Naive thymus-derived CD4-positive, alpha-beta T cell (primary cell): ENCODE measurements at regions of chr6 and their contacts with region 1.

Region 1: DNA sequence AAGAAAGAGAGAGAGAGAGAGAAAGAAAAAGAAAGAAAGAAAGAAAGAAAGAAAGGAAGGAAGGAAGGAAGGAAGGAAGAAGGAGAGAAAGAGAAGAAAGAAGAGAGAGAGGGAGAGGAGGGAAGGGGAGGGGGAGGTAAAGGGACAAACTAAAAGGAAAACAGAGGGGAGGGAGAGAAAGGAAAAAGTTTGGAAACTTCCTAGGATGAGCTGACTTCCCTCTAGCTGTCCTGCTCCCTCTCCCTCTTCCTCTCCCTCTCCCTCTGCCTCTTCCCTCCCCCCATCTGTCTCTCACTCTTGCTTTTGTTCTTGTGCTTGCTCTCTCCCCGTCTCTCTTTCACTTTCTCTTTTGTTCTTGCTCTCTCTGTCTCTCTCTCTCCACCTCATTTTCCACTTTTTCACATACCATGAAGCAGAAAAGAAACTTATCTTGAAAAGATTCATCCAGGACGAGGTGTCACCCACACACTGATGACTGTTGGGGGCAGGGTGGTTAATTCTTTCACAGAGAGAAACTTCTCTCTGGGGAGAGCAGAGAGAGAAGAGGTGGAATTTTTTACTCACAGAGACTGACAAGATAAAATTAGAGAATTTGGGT is 56.4 kb upstream of the DUSP22 start:
- DNase-seq: peak in 8 of 9 donors; percentile 33 to 66 (median 60)
- ATAC-seq: peak; percentile 88
- H3K4me3 ChIP-seq: peak overlapping the region; percentile 41
- H3K4me3 Mint-ChIP-seq: peak overlapping the region; percentile 67 to 85 (median 79)
- H3K27ac ChIP-seq: peak overlapping the region; percentile 56
- H3K27ac Mint-ChIP-seq: peak overlapping the region; percentile 82 to 95 (median 88)
- H3K4me1 ChIP-seq: peaks cover 15 to 22% of the 10 kb centered on the region in 2 donors
- H3K4me1 Mint-ChIP-seq: peaks cover 19 to 45% (median 27%) of the 10 kb centered on the region in 7 donors
- H3K27me3 ChIP-seq: no peaks in the 10 kb centered on the region
- H3K27me3 Mint-ChIP-seq: no peaks in the 10 kb centered on the region

Region 2: DNA sequence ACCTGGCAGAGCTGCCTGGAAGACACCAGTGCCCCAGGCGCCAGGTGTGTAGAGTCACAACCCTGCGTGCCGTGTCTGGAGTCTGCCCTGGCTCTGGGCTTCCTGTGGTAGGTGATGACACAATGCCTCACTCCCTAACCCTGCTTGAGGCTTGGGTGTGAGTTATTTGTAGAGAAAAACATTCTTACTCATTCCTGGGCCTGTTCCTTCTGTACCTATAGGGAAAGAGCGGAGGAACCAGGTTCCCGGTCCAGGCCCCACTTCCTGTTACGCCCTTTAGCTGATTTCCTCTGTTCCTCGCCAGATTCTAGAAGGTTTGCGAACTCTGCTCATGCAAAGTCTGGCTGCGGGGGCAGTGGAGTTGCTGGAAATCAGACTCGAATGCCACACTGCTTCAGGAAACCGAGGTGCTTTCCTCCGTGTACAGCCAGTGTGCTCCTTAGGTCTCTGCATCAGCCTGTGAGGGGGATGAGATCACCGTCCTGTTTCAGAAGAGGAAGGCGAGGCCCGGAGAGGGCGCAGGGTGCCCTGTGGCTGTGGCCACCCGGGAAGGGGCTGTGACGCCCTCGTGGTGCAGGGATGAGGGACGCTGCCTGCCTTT is 10.6 kb before region 1 on chr6:
- CTCF ChIA-PET with region 1: no interaction called
- POLR2A ChIA-PET with region 1: interaction called, 4 read pairs
- intact Hi-C with region 1: loop called in 1 of 2 experiments (anchors 1 kb)
- DNase-seq: peak in 8 of 9 donors; percentile 2 to 73 (median 20)
- ATAC-seq: peak; percentile 79
- H3K4me3 ChIP-seq: peak overlapping the region; percentile 6
- H3K4me3 Mint-ChIP-seq: peak overlapping the region; percentile 66 to 87 (median 80)
- H3K27ac ChIP-seq: no peak overlapping the region
- H3K27ac Mint-ChIP-seq: peak overlapping the region in 8 of 9 donors; percentile 56 to 99 (median 88)
- H3K4me1 ChIP-seq: peaks cover 20 to 21% of the 10 kb centered on the region in 2 donors
- H3K4me1 Mint-ChIP-seq: peaks cover 11 to 74% (median 29%) of the 10 kb centered on the region in 7 donors
- H3K27me3 ChIP-seq: no peaks in the 10 kb centered on the region
- H3K27me3 Mint-ChIP-seq: no peaks in the 10 kb centered on the region

Region 3: DNA sequence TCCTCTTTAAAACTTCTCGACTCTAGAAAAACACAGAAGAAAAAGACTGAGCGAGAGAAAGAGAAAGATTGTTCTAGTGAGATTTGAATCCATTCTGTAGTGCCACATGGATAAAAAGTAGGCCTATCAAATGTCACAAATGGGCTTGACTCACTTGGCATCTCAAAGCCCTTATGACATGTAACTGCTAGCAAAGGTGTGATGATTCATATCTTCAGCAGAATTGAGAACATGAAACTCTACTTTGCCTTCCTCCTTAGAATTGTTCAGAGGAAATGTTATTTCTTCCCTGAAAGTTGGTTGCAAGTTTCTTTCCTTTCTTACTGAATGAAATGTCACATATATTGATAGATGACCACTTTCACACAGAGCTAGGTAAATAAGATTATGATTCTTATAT is 16.1 kb after region 1 on chr6:
- CTCF ChIA-PET with region 1: no interaction called
- POLR2A ChIA-PET with region 1: interaction called, 3 read pairs
- intact Hi-C with region 1: loop called in 1 of 2 experiments (anchors 2 kb)
- DNase-seq: no peak
- ATAC-seq: peak; percentile 32
- H3K4me3 ChIP-seq: no peak overlapping the region
- H3K4me3 Mint-ChIP-seq: peak overlapping the region in 1 of 10 donors; percentile 3
- H3K27ac ChIP-seq: no peak overlapping the region
- H3K27ac Mint-ChIP-seq: peak overlapping the region in 2 of 9 donors; percentile 44 to 77
- H3K4me1 ChIP-seq: peaks cover 7 to 11% of the 10 kb centered on the region in 2 donors
- H3K4me1 Mint-ChIP-seq: peaks cover 19 to 36% (median 32%) of the 10 kb centered on the region in 7 donors
- H3K27me3 ChIP-seq: no peaks in the 10 kb centered on the region
- H3K27me3 Mint-ChIP-seq: no peaks in the 10 kb centered on the region

Region 4: GRCh38 chr6:273551-274058 is 37.7 kb after region 1 on chr6:
- CTCF ChIA-PET with region 1: no interaction called
- POLR2A ChIA-PET with region 1: no interaction called
- intact Hi-C with region 1: no loop called
- DNase-seq: no peak
- ATAC-seq: no peak
- H3K4me3 ChIP-seq: no peak overlapping the region
- H3K4me3 Mint-ChIP-seq: no peak overlapping the region
- H3K27ac ChIP-seq: no peak overlapping the region
- H3K27ac Mint-ChIP-seq: no peak overlapping the region
- H3K4me1 ChIP-seq: peaks cover 0 to 4% of the 10 kb centered on the region in 2 donors
- H3K4me1 Mint-ChIP-seq: peaks cover 8 to 41% (median 35%) of the 10 kb centered on the region in 7 donors
- H3K27me3 ChIP-seq: no peaks in the 10 kb centered on the region
- H3K27me3 Mint-ChIP-seq: peaks cover 0 to 11% (median 0%) of the 10 kb centered on the region in 5 donors

Region 5: DNA sequence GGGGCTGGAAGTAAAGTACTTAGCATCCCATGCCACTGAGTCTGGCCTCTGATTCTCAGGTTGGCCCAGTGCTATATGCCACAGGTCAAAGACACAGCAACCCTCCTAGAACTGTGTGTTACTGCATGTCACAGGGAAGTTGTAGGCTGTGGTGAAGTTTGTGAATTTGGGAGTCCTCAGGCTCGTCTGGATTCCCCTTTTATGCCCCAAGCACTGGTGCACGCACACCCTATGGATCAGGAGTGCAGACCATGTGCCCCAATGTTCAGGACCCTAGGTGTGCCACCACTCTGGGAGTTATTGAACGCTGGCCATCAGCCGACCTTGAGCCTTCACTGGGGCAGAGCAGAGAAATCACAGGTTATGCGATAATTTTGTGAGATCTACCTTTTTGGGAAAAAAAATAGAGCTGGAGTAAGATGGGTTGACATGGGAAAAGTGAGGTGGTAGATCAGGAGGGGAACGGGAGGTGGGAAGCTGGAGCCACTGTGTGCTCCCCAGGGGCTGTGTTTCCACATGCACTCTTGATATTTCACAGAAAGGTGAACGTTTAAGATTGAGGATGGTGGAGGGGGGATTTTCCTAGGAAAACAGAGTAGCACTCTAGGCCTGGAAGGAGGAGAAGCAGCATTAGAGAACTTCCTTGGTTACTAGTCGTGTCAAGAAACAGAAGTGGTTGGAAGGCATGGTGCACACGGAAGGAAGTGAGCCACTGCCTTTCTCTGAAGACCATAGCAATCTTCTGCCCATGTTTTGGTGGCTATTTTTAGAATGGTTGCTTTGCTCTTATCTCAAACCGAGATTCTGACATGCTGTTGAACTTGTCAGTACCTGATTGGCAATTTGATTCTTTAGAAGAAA is 100.5 kb after region 1 on chr6:
- CTCF ChIA-PET with region 1: no interaction called
- POLR2A ChIA-PET with region 1: no interaction called
- intact Hi-C with region 1: loop called in 1 of 2 experiments (anchors 1 kb)
- DNase-seq: peak in 2 of 9 donors; percentile 13 to 18
- ATAC-seq: peak; percentile 58
- H3K4me3 ChIP-seq: no peak overlapping the region
- H3K4me3 Mint-ChIP-seq: peak overlapping the region; percentile 2 to 74 (median 42)
- H3K27ac ChIP-seq: no peak overlapping the region
- H3K27ac Mint-ChIP-seq: peak overlapping the region in 7 of 9 donors; percentile 18 to 87 (median 60)
- H3K4me1 ChIP-seq: peaks cover 21 to 28% of the 10 kb centered on the region in 2 donors
- H3K4me1 Mint-ChIP-seq: peaks cover 28 to 54% (median 52%) of the 10 kb centered on the region in 7 donors
- H3K27me3 ChIP-seq: no peaks in the 10 kb centered on the region
- H3K27me3 Mint-ChIP-seq: no peaks in the 10 kb centered on the region

Region 6: GRCh38 chr6:490251-491037 is 254.6 kb after region 1 on chr6:
- CTCF ChIA-PET with region 1: no interaction called
- POLR2A ChIA-PET with region 1: no interaction called
- intact Hi-C with region 1: loop called in 1 of 2 experiments (anchors 5 kb)
- DNase-seq: no peak
- ATAC-seq: peak; percentile 47
- H3K4me3 ChIP-seq: peak overlapping the region; percentile 25
- H3K4me3 Mint-ChIP-seq: peak overlapping the region; percentile 19 to 87 (median 70)
- H3K27ac ChIP-seq: no peak overlapping the region
- H3K27ac Mint-ChIP-seq: peak overlapping the region; percentile 54 to 98 (median 84)
- H3K4me1 ChIP-seq: peaks cover 60 to 65% of the 10 kb centered on the region in 2 donors
- H3K4me1 Mint-ChIP-seq: peaks cover 46 to 78% (median 70%) of the 10 kb centered on the region in 7 donors
- H3K27me3 ChIP-seq: no peaks in the 10 kb centered on the region
- H3K27me3 Mint-ChIP-seq: no peaks in the 10 kb centered on the region

Region 7: DNA sequence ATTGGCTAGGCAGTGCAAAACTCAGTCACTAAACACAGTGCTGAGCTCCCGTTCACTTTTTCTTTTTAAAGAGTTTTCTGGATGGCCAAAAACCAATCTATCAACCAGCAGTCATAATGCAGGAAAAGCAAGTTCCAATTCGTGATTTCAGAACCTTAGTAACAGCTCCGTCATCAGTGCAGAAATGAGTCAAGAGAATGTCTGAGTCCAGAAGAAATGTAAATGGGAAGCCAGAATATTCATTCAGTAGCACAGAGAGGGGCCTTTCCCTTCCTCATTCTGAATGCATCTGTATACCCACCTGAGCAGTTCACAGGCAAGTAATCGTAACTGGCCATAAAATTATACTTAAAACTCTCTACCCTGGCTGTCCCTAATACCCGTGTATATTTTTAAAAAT is 400.6 kb after region 1 on chr6:
- CTCF ChIA-PET with region 1: no interaction called
- POLR2A ChIA-PET with region 1: no interaction called
- intact Hi-C with region 1: no loop called
- DNase-seq: no peak
- ATAC-seq: no peak
- H3K4me3 ChIP-seq: no peak overlapping the region
- H3K4me3 Mint-ChIP-seq: no peak overlapping the region
- H3K27ac ChIP-seq: no peak overlapping the region
- H3K27ac Mint-ChIP-seq: no peak overlapping the region
- H3K4me1 ChIP-seq: no peaks in the 10 kb centered on the region
- H3K4me1 Mint-ChIP-seq: peaks cover 5 to 26% (median 10%) of the 10 kb centered on the region in 7 donors
- H3K27me3 ChIP-seq: no peaks in the 10 kb centered on the region
- H3K27me3 Mint-ChIP-seq: no peaks in the 10 kb centered on the region

Region 8: GRCh38 chr6:683742-684440 is 448.0 kb after region 1 on chr6:
- CTCF ChIA-PET with region 1: no interaction called
- POLR2A ChIA-PET with region 1: no interaction called
- intact Hi-C with region 1: no loop called
- DNase-seq: no peak
- ATAC-seq: no peak
- H3K4me3 ChIP-seq: no peak overlapping the region
- H3K4me3 Mint-ChIP-seq: peak overlapping the region; percentile 14 to 82 (median 62)
- H3K27ac ChIP-seq: no peak overlapping the region
- H3K27ac Mint-ChIP-seq: peak overlapping the region in 2 of 9 donors; percentile 79 to 80
- H3K4me1 ChIP-seq: peaks cover 20 to 27% of the 10 kb centered on the region in 2 donors
- H3K4me1 Mint-ChIP-seq: peaks cover 42 to 59% (median 50%) of the 10 kb centered on the region in 7 donors
- H3K27me3 ChIP-seq: no peaks in the 10 kb centered on the region
- H3K27me3 Mint-ChIP-seq: no peaks in the 10 kb centered on the region